ENCODE measurements at regions of chr18 and their contacts with region 1.

Region 1: DNA sequence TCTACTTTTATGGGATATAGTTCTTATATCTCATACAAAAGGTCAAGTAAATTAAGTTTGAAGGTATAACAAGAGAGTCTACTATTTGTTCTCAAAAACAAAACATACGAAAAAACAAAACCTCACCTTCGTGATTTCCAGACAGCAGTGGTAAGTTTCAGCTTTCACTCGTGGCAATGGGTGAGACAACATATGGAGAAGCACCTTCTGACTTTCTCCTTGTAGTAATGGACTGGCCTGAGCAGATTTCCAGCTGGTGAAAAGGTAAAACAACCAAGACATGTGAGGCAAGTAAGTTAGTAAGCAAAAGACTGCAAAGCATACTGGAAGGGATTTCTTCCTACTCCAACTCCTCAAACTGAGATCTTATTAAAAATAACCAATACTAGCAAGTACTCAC is 39.6 kb downstream of the RTTN start:
- DNase-seq: no peak
- H3K4me3 ChIP-seq: no peak overlapping the region
- H3K27ac ChIP-seq: peak overlapping the region in 2 of 4 donors; percentile 52 to 76
- H3K4me1 ChIP-seq: peaks cover 0 to 15% (median 10%) of the 10 kb centered on the region in 4 donors
- H3K27me3 ChIP-seq: no peaks in the 10 kb centered on the region
- CTCF ChIP-seq: no peak
- EP300 ChIP-seq: no peak
- POLR2A ChIP-seq: no peak

Region 2: GRCh38 chr18:70149616-70150304 is 16.2 kb before region 1 on chr18:
- intact Hi-C with region 1: loop called (anchors 1 kb)
- DNase-seq: no peak
- H3K4me3 ChIP-seq: no peak overlapping the region
- H3K27ac ChIP-seq: peak overlapping the region in 2 of 4 donors; percentile 69 to 71
- H3K4me1 ChIP-seq: peaks cover 0 to 9% (median 0%) of the 10 kb centered on the region in 4 donors
- H3K27me3 ChIP-seq: no peaks in the 10 kb centered on the region
- CTCF ChIP-seq: no peak
- EP300 ChIP-seq: no peak
- POLR2A ChIP-seq: no peak

Region 3: GRCh38 chr18:71426441-71426840 is 1260.5 kb after region 1 on chr18:
- intact Hi-C with region 1: no loop called
- DNase-seq: no peak
- H3K4me3 ChIP-seq: no peak overlapping the region
- H3K27ac ChIP-seq: no peak overlapping the region
- H3K4me1 ChIP-seq: no peaks in the 10 kb centered on the region
- H3K27me3 ChIP-seq: no peaks in the 10 kb centered on the region
- CTCF ChIP-seq: no peak
- EP300 ChIP-seq: no peak
- POLR2A ChIP-seq: no peak